Adrenal gland (tissue), 19 donors: ENCODE measurements at regions of chr3 and their contacts with region 1.

Region 1: GRCh38 chr3:129934234-129935123 is 40.0 kb upstream of the TRH start:
- DNase-seq: peak in 6 of 7 donors; percentile 13 to 61 (median 30)
- H3K4me3 ChIP-seq: peak overlapping the region in 1 of 4 donors; percentile 41
- H3K27ac ChIP-seq: no peak overlapping the region
- H3K4me1 ChIP-seq: peaks cover 0 to 4% of the 10 kb centered on the region in 2 donors
- H3K27me3 ChIP-seq: no peaks in the 10 kb centered on the region
- CTCF ChIP-seq: peak; percentile 84 to 95 (median 87)
- POLR2A ChIP-seq: no peak

Region 2: GRCh38 chr3:129507181-129507831 is 427.2 kb before region 1 on chr3:
- intact Hi-C with region 1: loop called in 1 of 2 experiments (anchors 10 kb)
- DNase-seq: no peak
- H3K4me3 ChIP-seq: no peak overlapping the region
- H3K27ac ChIP-seq: no peak overlapping the region
- H3K4me1 ChIP-seq: peaks cover 0 to 7% of the 10 kb centered on the region in 2 donors
- H3K27me3 ChIP-seq: no peaks in the 10 kb centered on the region
- CTCF ChIP-seq: no peak
- POLR2A ChIP-seq: no peak

Region 3: GRCh38 chr3:129627429-129628168 is 306.9 kb before region 1 on chr3:
- intact Hi-C with region 1: loop called in 1 of 2 experiments (anchors 5 kb)
- DNase-seq: peak in 6 of 7 donors; percentile 51 to 90 (median 66)
- H3K4me3 ChIP-seq: peak overlapping the region in 1 of 4 donors; percentile 30
- H3K27ac ChIP-seq: peak overlapping the region; percentile 73 to 92 (median 89)
- H3K4me1 ChIP-seq: peaks cover 29 to 40% of the 10 kb centered on the region in 2 donors
- H3K27me3 ChIP-seq: no peaks in the 10 kb centered on the region
- CTCF ChIP-seq: peak; percentile 36 to 86 (median 67)
- POLR2A ChIP-seq: no peak

Region 4: GRCh38 chr3:129645290-129645689 is 289.2 kb before region 1 on chr3:
- intact Hi-C with region 1: loop called in 1 of 2 experiments (anchors 5 kb)
- DNase-seq: no peak
- H3K4me3 ChIP-seq: no peak overlapping the region
- H3K27ac ChIP-seq: no peak overlapping the region
- H3K4me1 ChIP-seq: peaks cover 0 to 5% of the 10 kb centered on the region in 2 donors
- H3K27me3 ChIP-seq: no peaks in the 10 kb centered on the region
- CTCF ChIP-seq: no peak
- POLR2A ChIP-seq: no peak